ENCODE measurements at regions of chr2 and their contacts with region 1.

Region 1: DNA sequence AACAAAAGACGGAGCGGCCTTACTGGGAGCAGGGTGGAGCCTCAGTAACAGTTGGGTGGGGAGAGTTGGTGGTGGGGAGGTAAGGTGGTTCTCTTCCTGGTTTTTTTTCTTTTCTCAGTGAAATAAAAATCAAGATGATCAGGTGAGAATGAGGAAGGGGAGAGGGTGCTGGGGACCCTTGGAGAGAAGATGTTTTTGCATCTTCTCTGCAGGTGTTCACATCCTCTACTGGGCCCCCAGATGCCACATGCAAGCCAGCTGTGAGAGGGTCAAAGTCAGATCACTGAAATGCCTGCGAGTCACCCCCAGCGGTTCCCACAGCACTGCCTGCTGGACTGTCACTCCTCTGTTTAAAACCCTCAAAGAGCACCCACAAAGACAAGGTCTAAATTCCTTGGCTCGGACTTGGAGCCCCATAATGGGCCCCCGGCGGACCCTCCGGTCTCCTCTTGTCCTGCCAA is 69.8 kb upstream of the FHL2 start:
- DNase-seq: no peak
- ATAC-seq: no peak
- H3K4me3 ChIP-seq: no peak overlapping the region
- H3K27ac ChIP-seq: no peak overlapping the region
- H3K4me1 ChIP-seq: no peaks in the 10 kb centered on the region
- H3K27me3 ChIP-seq: peaks cover 0 to 4% of the 10 kb centered on the region in 2 experiments; a peak in 2 of 4 replicates
- CTCF ChIP-seq: no peak
- EP300 ChIP-seq: no peak
- POLR2A ChIP-seq: no peak
- RAD21 ChIP-seq: no peak

Region 2: GRCh38 chr2:105417857-105418436 is 50.7 kb before region 1 on chr2:
- CTCF ChIA-PET with region 1: no interaction called
- POLR2A ChIA-PET with region 1: no interaction called
- RAD21 ChIA-PET with region 1: no interaction called
- SMC1A ChIA-PET with region 1: no interaction called
- in situ Hi-C with region 1: no loop called
- intact Hi-C with region 1: loop called (anchors 1 kb)
- DNase-seq: no peak
- ATAC-seq: peak; percentile 70
- H3K4me3 ChIP-seq: no peak overlapping the region
- H3K27ac ChIP-seq: no peak overlapping the region
- H3K4me1 ChIP-seq: no peaks in the 10 kb centered on the region
- H3K27me3 ChIP-seq: no peaks in the 10 kb centered on the region; a peak in 2 of 4 replicates
- CTCF ChIP-seq: no peak
- EP300 ChIP-seq: no peak
- POLR2A ChIP-seq: no peak
- RAD21 ChIP-seq: no peak

Region 3: GRCh38 chr2:105454801-105455485 is 13.7 kb before region 1 on chr2:
- CTCF ChIA-PET with region 1: no interaction called
- POLR2A ChIA-PET with region 1: no interaction called
- RAD21 ChIA-PET with region 1: no interaction called
- SMC1A ChIA-PET with region 1: no interaction called
- in situ Hi-C with region 1: no loop called
- intact Hi-C with region 1: no loop called
- DNase-seq: peak; percentile 1
- ATAC-seq: peak; percentile 79
- H3K4me3 ChIP-seq: no peak overlapping the region
- H3K27ac ChIP-seq: no peak overlapping the region
- H3K4me1 ChIP-seq: no peaks in the 10 kb centered on the region
- H3K27me3 ChIP-seq: no peaks in the 10 kb centered on the region
- CTCF ChIP-seq: peak; percentile 18 to 34 (median 33); a peak in 2 of 6 replicates
- EP300 ChIP-seq: no peak
- POLR2A ChIP-seq: no peak
- RAD21 ChIP-seq: 0 out of 2 replicates have a peak, but pooled peaks have one; percentile 6